CD14-positive monocyte (primary cell): ENCODE measurements at regions of chr22 and their contacts with region 1.

Region 1: DNA sequence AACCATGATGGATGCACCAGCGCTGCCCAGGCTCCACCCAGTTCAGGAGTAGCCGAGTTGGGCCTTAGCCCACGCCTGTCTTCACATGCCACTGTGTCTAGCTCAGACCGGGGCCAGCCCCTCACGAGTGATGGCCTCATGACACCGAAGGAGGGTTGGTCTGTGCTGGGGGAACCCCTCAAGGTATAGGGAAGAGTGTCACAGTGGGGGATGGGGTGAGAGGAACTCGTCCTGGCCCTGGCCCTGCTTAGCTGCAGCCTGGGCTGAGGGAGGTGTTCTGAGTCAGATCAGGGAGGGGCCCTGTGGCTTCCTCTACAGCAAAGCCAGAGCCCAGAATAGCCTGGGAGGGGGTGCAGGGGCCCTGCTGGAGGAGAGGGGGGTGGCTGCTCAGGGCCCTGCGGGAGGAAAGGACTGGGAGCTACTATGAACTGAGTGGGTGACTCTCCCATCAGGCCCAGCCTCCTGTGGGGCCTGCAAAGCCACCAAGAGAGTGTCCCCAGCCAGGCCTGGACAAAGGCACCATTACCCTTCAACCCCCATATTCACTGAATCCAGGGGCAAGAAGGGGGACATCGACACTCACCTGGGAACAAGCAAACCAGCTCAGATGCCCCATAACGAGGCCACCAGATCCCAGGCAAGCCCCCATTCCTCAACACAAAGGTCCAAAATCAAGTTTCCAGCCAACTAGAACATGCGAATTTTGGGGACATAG is 41.2 kb downstream of the IGLL5 start:
- DNase-seq: peak; percentile 100
- H3K4me3 ChIP-seq: peak overlapping the region in 1 of 3 experiments; percentile 35
- H3K4me3 Mint-ChIP-seq: peak overlapping the region in 1 of 2 donors; percentile 67
- H3K27ac ChIP-seq: peak overlapping the region; percentile 93 to 99
- H3K27ac Mint-ChIP-seq: peak overlapping the region; percentile 97 to 100 (median 99)
- H3K4me1 ChIP-seq: peaks cover 70 to 87% of the 10 kb centered on the region in 2 donors
- H3K4me1 Mint-ChIP-seq: peaks cover 71% of the 10 kb centered on the region
- H3K27me3 ChIP-seq: no peaks in the 10 kb centered on the region
- H3K27me3 Mint-ChIP-seq: peaks cover 0 to 2% (median 1%) of the 10 kb centered on the region in 3 donors
- CTCF ChIP-seq: no peak

Region 2: GRCh38 chr22:22450343-22450839 is 478.4 kb before region 1 on chr22:
- intact Hi-C with region 1: no loop called
- DNase-seq: peak; percentile 67 to 77 (median 68)
- H3K4me3 ChIP-seq: no peak overlapping the region
- H3K4me3 Mint-ChIP-seq: no peak overlapping the region
- H3K27ac ChIP-seq: no peak overlapping the region
- H3K27ac Mint-ChIP-seq: no peak overlapping the region
- H3K4me1 ChIP-seq: peaks cover 5% of the 10 kb centered on the region in 2 donors
- H3K4me1 Mint-ChIP-seq: peaks cover 9% of the 10 kb centered on the region
- H3K27me3 ChIP-seq: peaks cover 0 to 3% of the 10 kb centered on the region in 2 donors
- H3K27me3 Mint-ChIP-seq: peaks cover 3 to 35% (median 5%) of the 10 kb centered on the region in 3 donors
- CTCF ChIP-seq: no peak

Region 3: GRCh38 chr22:22720201-22720723 is 208.6 kb before region 1 on chr22:
- intact Hi-C with region 1: loop called in 1 of 2 experiments (anchors 10 kb)
- DNase-seq: peak; percentile 76 to 84 (median 84)
- H3K4me3 ChIP-seq: peak overlapping the region in 1 of 3 experiments; percentile 45
- H3K4me3 Mint-ChIP-seq: peak overlapping the region in 1 of 2 donors; percentile 78
- H3K27ac ChIP-seq: peak overlapping the region; percentile 95 to 99
- H3K27ac Mint-ChIP-seq: peak overlapping the region; percentile 96 to 99 (median 99)
- H3K4me1 ChIP-seq: peaks cover 39 to 47% of the 10 kb centered on the region in 2 donors
- H3K4me1 Mint-ChIP-seq: peaks cover 44% of the 10 kb centered on the region
- H3K27me3 ChIP-seq: no peaks in the 10 kb centered on the region
- H3K27me3 Mint-ChIP-seq: no peaks in the 10 kb centered on the region
- CTCF ChIP-seq: peak; percentile 88

Region 4: GRCh38 chr22:22810018-22810427 is 118.8 kb before region 1 on chr22:
- intact Hi-C with region 1: no loop called
- DNase-seq: peak; percentile 31 to 73 (median 41)
- H3K4me3 ChIP-seq: no peak overlapping the region
- H3K4me3 Mint-ChIP-seq: no peak overlapping the region
- H3K27ac ChIP-seq: no peak overlapping the region
- H3K27ac Mint-ChIP-seq: no peak overlapping the region
- H3K4me1 ChIP-seq: peaks cover 27 to 33% of the 10 kb centered on the region in 2 donors
- H3K4me1 Mint-ChIP-seq: peaks cover 36% of the 10 kb centered on the region
- H3K27me3 ChIP-seq: no peaks in the 10 kb centered on the region
- H3K27me3 Mint-ChIP-seq: peaks cover 0 to 3% (median 0%) of the 10 kb centered on the region in 3 donors
- CTCF ChIP-seq: peak; percentile 99

Region 5: DNA sequence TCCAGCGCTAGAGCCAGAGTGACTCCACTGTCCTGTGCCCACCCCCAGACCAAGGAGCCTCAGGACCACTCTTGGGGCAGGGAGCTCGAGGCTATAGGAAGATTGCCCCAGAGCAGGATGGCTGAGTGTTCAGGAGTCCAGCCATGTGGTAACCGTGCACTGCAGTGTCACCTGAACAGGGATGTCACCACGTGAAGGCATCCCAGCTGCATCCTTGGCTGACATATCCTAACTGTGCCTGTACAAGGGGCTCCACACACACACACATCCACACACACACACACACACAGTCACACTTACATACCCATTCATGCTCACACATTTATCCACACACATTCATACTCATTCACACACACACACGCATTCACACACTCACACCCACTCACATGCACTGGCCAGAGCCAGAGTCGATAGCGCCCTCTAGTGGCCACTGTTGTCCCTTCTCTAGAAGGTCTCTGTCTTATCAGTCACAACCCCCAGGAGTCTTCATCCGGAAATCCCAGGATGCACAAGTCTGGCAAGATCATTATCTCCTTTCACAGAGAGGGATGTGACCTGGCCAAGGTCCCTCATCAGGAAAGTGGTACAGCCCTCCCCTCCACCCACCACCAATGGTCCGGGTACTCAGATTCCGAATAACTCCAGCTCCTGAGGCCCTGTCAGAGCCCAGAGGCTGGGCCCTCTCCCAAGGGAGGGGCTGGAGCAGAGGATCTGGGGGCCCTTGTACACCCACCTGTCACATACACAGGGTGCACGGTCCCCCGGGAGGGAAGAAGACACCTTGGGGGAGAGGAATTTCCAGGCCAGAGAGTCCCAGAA is 13.9 kb after region 1 on chr22:
- intact Hi-C with region 1: loop called in 1 of 2 experiments (anchors 2 kb)
- DNase-seq: peak; percentile 81 to 86 (median 85)
- H3K4me3 ChIP-seq: no peak overlapping the region
- H3K4me3 Mint-ChIP-seq: no peak overlapping the region
- H3K27ac ChIP-seq: peak overlapping the region in 1 of 2 donors; percentile 50
- H3K27ac Mint-ChIP-seq: peak overlapping the region in 6 of 7 donors; percentile 33 to 90 (median 64)
- H3K4me1 ChIP-seq: peaks cover 61 to 63% of the 10 kb centered on the region in 2 donors
- H3K4me1 Mint-ChIP-seq: peaks cover 59% of the 10 kb centered on the region
- H3K27me3 ChIP-seq: no peaks in the 10 kb centered on the region
- H3K27me3 Mint-ChIP-seq: peaks cover 3 to 11% (median 4%) of the 10 kb centered on the region in 3 donors
- CTCF ChIP-seq: peak; percentile 88